MCF 10A (cell line): ENCODE measurements at regions of chr6 and their contacts with region 1.

Region 1: GRCh38 chr6:143325379-143326140 is 124.9 kb downstream of the ADAT2 start:
- DNase-seq: peak; percentile 77
- H3K4me3 Mint-ChIP-seq: no peak overlapping the region
- H3K27ac Mint-ChIP-seq: no peak overlapping the region
- H3K4me1 Mint-ChIP-seq: peaks cover 13% of the 10 kb centered on the region
- H3K27me3 Mint-ChIP-seq: no peaks in the 10 kb centered on the region
- CTCF ChIP-seq: no peak

Region 2: DNA sequence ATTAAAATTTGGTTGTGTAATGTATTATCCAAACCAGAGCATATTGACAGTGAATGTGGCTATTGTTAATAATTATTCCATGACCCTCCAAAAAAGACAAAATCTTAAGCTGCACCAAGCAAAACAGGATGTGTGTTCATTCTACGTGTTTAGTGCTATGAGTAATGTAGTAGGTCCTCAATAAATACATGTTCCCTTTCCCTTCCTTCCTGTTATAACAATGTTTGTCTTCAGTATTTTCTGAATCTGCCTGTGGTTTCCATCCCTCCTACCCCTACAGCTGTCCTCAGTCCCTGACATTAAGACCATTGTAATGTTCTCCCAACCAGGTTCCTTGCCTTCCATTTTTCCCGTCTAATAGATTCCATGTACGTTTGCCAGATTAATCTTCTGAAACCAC is 101.0 kb before region 1 on chr6:
- CTCF ChIA-PET with region 1: interaction called, 3 read pairs
- POLR2A ChIA-PET with region 1: interaction called, 12 read pairs
- intact Hi-C with region 1: no loop called
- DNase-seq: no peak
- H3K4me3 Mint-ChIP-seq: no peak overlapping the region
- H3K27ac Mint-ChIP-seq: peak overlapping the region; percentile 84
- H3K4me1 Mint-ChIP-seq: peaks cover 17% of the 10 kb centered on the region
- H3K27me3 Mint-ChIP-seq: no peaks in the 10 kb centered on the region
- CTCF ChIP-seq: no peak

Region 3: DNA sequence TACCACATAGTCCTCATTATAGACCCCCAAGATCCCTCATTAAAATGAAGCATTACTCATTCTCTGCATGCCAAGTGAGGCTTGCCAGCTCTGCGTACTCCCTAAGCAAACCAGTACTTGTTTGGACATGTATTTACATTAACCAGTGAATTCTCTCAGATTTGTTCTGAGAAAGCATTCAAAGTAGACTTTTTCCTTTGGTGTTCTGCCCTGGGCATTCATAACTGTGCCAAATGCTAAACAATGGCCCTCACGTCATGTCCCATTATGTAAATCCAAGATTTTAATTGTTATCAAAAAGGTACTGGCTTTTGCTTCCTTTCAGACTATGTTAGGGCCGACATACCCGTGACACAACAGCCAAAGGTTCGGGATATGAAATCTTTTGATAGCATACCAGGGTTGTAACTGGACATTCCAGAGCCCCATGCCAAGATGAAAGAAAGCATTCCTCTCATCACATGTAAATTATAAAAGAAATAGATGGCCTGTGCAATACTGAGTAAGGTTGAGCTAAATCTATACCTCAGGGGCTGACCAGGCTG is 39.2 kb before region 1 on chr6:
- CTCF ChIA-PET with region 1: no interaction called
- POLR2A ChIA-PET with region 1: interaction called, 15 read pairs
- intact Hi-C with region 1: no loop called
- DNase-seq: peak; percentile 91
- H3K4me3 Mint-ChIP-seq: no peak overlapping the region
- H3K27ac Mint-ChIP-seq: peak overlapping the region; percentile 87
- H3K4me1 Mint-ChIP-seq: peaks cover 26% of the 10 kb centered on the region
- H3K27me3 Mint-ChIP-seq: no peaks in the 10 kb centered on the region
- CTCF ChIP-seq: no peak

Region 4: GRCh38 chr6:143450453-143451371 is 125.2 kb after region 1 on chr6 and contains the starts of genes ADAT2 and PEX3:
- CTCF ChIA-PET with region 1: no interaction called
- POLR2A ChIA-PET with region 1: interaction called, 12 read pairs
- intact Hi-C with region 1: no loop called
- DNase-seq: peak; percentile 95
- H3K4me3 Mint-ChIP-seq: peak within 1 kb of the TSS; percentile 97
- H3K27ac Mint-ChIP-seq: peak within 1 kb of the TSS; percentile 97
- H3K4me1 Mint-ChIP-seq: peaks cover 24% of the 10 kb centered on the region
- H3K27me3 Mint-ChIP-seq: no peaks in the 10 kb centered on the region
- CTCF ChIP-seq: no peak
- total RNA-seq, gene ADAT2: 23.2 and 27.7 TPM in 2 replicates
- total RNA-seq, gene PEX3: 19.8 and 24.3 TPM in 2 replicates